MCF 10A (cell line): ENCODE measurements at regions of chr19 and their contacts with region 1.

Region 1: GRCh38 chr19:43651758-43652545 is 12.3 kb upstream of the CADM4 start:
- DNase-seq: peak; percentile 75
- H3K4me3 Mint-ChIP-seq: no peak overlapping the region
- H3K27ac Mint-ChIP-seq: peak overlapping the region; percentile 42
- H3K4me1 Mint-ChIP-seq: no peaks in the 10 kb centered on the region
- H3K27me3 Mint-ChIP-seq: no peaks in the 10 kb centered on the region
- CTCF ChIP-seq: peak; percentile 59

Region 2: DNA sequence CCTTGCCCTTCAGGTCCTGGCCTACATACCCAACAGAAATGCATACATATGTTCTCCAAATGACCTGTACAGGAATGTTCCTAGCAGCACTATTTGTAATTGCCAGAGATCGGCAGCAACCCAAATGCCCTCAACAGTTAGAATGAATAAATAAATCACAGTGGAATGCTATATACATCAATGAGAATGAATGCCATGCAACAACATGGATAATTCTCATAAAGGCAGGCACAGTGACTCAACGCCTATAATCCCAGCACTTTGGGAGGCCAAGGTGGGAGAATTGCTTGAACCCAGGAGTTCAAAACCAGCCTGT is 218.6 kb before region 1 on chr19:
- CTCF ChIA-PET with region 1: interaction called, 3 read pairs
- POLR2A ChIA-PET with region 1: interaction called, 3 read pairs
- intact Hi-C with region 1: loop called (anchors 1 kb)
- DNase-seq: no peak
- H3K4me3 Mint-ChIP-seq: no peak overlapping the region
- H3K27ac Mint-ChIP-seq: no peak overlapping the region
- H3K4me1 Mint-ChIP-seq: peaks cover 2% of the 10 kb centered on the region
- H3K27me3 Mint-ChIP-seq: no peaks in the 10 kb centered on the region
- CTCF ChIP-seq: no peak

Region 3: GRCh38 chr19:43555185-43555770 is 96.7 kb before region 1 on chr19:
- CTCF ChIA-PET with region 1: interaction called, 9 read pairs
- POLR2A ChIA-PET with region 1: no interaction called
- intact Hi-C with region 1: loop called (anchors 1 kb)
- DNase-seq: peak; percentile 81
- H3K4me3 Mint-ChIP-seq: no peak overlapping the region
- H3K27ac Mint-ChIP-seq: no peak overlapping the region
- H3K4me1 Mint-ChIP-seq: no peaks in the 10 kb centered on the region
- H3K27me3 Mint-ChIP-seq: no peaks in the 10 kb centered on the region
- CTCF ChIP-seq: peak; percentile 76

Region 4: DNA sequence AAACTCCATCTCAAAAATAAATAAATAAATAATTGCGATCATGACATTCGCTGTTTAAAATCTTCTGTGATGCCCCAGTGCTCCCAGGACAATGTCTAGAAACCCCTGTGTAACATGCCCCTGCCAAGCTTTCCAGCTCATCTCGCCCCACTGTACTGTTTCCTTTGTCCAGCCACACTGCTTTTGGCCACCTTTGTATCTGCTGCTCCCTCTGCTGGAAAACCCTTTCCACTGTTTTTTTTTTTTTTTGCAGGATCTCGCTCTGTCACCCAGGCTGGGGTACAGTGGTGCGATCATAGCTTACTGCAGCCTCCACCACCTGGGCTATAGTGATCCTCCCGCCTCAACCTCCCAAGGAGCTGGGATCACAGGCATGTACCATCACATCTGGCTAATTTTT is 10.5 kb after region 1 on chr19:
- CTCF ChIA-PET with region 1: interaction called, 20 read pairs
- POLR2A ChIA-PET with region 1: no interaction called
- intact Hi-C with region 1: no loop called
- DNase-seq: peak; percentile 40
- H3K4me3 Mint-ChIP-seq: no peak overlapping the region
- H3K27ac Mint-ChIP-seq: no peak overlapping the region
- H3K4me1 Mint-ChIP-seq: no peaks in the 10 kb centered on the region
- H3K27me3 Mint-ChIP-seq: no peaks in the 10 kb centered on the region
- CTCF ChIP-seq: peak; percentile 17